Activated naive CD4-positive, alpha-beta T cell treated with anti-CD3 and anti-CD28 coated beads for 36 hours (primary cell): ENCODE measurements at regions of chr1 and their contacts with region 1.

Region 1: GRCh38 chr1:243850452-243851256 is 611 bp upstream of the AKT3 start:
- DNase-seq: peak; percentile 86
- H3K4me3 Mint-ChIP-seq: peak overlapping the region; percentile 80
- H3K27ac Mint-ChIP-seq: peak overlapping the region; percentile 81
- H3K4me1 Mint-ChIP-seq: peaks cover 30% of the 10 kb centered on the region
- H3K27me3 Mint-ChIP-seq: peaks cover 7% of the 10 kb centered on the region

Region 2: GRCh38 chr1:243343970-243344937 is 506.4 kb before region 1 on chr1:
- CTCF ChIA-PET with region 1: no interaction called
- intact Hi-C with region 1: loop called (anchors 2 kb)
- DNase-seq: no peak
- H3K4me3 Mint-ChIP-seq: no peak overlapping the region
- H3K27ac Mint-ChIP-seq: no peak overlapping the region
- H3K4me1 Mint-ChIP-seq: peaks cover 2% of the 10 kb centered on the region
- H3K27me3 Mint-ChIP-seq: no peaks in the 10 kb centered on the region

Region 3: GRCh38 chr1:243713470-243714186 is 137.0 kb before region 1 on chr1:
- CTCF ChIA-PET with region 1: no interaction called
- intact Hi-C with region 1: loop called (anchors 5 kb)
- DNase-seq: no peak
- H3K4me3 Mint-ChIP-seq: no peak overlapping the region
- H3K27ac Mint-ChIP-seq: no peak overlapping the region
- H3K4me1 Mint-ChIP-seq: peaks cover 25% of the 10 kb centered on the region
- H3K27me3 Mint-ChIP-seq: no peaks in the 10 kb centered on the region

Region 4: DNA sequence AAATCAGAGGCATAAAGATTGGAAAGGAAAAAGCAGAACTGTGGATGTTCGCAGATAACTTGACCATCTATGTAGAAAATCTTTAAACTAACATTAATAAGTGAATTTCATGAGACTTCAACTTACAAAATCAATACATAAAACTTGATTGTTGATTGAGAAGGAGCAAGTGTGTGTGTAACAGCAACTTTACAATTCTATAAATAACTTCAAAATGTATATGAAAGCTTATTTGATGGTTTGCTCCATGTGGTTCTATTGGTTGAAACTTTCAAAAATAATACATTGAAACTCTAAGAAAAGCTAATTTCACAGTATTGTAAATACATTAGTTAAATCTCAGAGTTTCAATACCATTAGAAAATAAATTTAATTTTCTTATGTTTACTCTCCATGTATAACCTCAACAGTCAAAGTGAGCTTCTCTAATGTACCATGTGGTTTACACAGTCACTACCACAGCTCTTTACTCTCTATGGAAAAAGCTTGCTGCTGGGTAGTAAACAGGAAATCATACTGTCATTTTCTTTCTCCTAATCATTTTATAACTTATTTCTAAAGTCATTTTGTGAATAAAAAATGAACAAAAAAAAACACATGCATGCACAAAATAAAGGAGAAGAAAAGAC is 12.6 kb before region 1 on chr1:
- CTCF ChIA-PET with region 1: interaction called, 3 read pairs
- intact Hi-C with region 1: loop called (anchors 1 kb)
- DNase-seq: no peak
- H3K4me3 Mint-ChIP-seq: no peak overlapping the region
- H3K27ac Mint-ChIP-seq: no peak overlapping the region
- H3K4me1 Mint-ChIP-seq: peaks cover 30% of the 10 kb centered on the region
- H3K27me3 Mint-ChIP-seq: no peaks in the 10 kb centered on the region

Region 5: DNA sequence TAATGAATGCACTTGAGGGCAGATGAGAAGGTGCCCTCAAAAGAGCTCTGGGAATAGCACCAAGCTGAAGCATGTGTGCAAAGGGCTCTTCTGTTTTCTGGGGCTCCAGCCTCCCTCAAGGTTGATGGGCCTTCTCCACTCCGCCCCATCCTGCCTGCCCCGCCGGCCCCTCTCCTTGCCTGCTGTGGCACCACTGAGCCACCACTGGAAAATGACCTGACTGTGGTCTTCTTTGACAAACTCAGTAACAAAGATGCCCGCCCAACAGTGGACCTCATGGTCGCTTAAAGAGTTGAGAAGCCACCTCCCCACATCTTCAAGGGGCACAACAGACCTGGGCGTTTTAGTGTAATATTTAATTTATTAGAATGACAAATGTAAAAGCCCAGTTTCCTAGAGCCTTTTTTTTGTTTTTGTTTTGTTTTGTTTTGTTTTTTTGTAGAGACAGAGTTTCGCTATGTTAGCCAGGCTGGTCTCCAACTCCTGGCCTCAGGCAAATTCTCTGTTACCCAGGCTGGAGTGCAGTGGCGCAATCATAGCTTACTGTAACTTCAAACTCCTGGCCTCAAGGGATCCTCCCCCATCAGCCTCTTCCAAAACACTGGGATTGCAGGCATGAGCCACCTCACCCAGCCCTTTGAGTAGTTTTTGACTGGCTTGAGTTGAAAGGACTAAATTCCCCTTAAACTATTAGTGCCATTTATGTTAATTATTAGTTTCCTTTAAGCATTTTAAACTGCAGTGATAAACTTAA is 171.5 kb after region 1 on chr1:
- CTCF ChIA-PET with region 1: no interaction called
- intact Hi-C with region 1: no loop called
- DNase-seq: no peak
- H3K4me3 Mint-ChIP-seq: no peak overlapping the region
- H3K27ac Mint-ChIP-seq: no peak overlapping the region
- H3K4me1 Mint-ChIP-seq: no peaks in the 10 kb centered on the region
- H3K27me3 Mint-ChIP-seq: no peaks in the 10 kb centered on the region

Region 6: GRCh38 chr1:244652699-244653466 is 802.2 kb after region 1 on chr1 and contains the start of gene DESI2:
- CTCF ChIA-PET with region 1: no interaction called
- intact Hi-C with region 1: loop called (anchors 2 kb)
- DNase-seq: peak; percentile 99
- H3K4me3 Mint-ChIP-seq: peak within 1 kb of the TSS; percentile 82
- H3K27ac Mint-ChIP-seq: peak within 1 kb of the TSS; percentile 88
- H3K4me1 Mint-ChIP-seq: peaks cover 18% of the 10 kb centered on the region
- H3K27me3 Mint-ChIP-seq: no peaks in the 10 kb centered on the region
- total RNA-seq, gene DESI2: 31.7 to 32.5 TPM